Transverse colon (tissue), 4 donors: ENCODE measurements at regions of chr1 and their contacts with region 1.

Region 1: DNA sequence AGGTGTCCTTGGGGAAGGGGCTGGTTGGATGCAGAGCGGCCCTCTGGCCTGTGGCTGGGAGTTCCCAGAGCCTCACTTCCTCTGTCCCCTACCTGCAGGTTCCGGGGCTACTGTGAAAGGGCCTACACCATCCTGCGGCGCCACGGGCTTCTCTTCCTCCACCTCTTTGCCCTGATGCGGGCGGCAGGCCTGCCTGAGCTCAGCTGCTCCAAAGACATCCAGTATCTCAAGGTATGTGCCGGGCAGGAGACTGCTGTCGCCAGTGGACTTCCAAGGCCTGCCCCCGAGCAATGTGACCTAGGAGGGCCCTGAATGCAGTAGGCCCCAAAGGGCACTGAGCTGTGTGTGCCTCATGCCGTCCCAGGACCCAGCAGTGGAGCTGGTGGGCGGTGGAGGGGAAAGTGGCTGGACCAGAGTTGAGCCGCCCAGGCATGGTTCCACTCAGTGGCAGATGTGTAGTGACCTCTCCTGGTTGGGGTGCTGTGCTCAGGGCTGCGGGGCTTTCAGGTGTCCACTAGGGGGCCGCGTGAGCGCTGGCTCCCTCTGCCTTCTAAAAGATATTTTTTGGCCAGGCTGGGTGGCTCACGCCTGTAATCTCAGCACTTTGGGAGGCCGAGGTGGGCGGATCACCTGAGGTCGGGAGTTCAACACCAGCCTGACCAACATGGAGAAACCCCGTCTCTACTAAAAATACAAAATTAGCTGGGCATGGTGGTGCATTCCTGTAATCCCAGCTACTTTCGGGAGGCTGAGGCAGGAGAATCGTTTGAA is 73.4 kb downstream of the PIK3CD start:
- DNase-seq: peak; percentile 65
- H3K4me3 ChIP-seq: no peak overlapping the region
- H3K27ac ChIP-seq: no peak overlapping the region
- H3K4me1 ChIP-seq: peaks cover 0 to 3% (median 0%) of the 10 kb centered on the region in 4 donors
- H3K27me3 ChIP-seq: no peaks in the 10 kb centered on the region
- CTCF ChIP-seq: peak; percentile 75 to 91 (median 84)
- EP300 ChIP-seq: no peak
- POLR2A ChIP-seq: no peak

Region 2: DNA sequence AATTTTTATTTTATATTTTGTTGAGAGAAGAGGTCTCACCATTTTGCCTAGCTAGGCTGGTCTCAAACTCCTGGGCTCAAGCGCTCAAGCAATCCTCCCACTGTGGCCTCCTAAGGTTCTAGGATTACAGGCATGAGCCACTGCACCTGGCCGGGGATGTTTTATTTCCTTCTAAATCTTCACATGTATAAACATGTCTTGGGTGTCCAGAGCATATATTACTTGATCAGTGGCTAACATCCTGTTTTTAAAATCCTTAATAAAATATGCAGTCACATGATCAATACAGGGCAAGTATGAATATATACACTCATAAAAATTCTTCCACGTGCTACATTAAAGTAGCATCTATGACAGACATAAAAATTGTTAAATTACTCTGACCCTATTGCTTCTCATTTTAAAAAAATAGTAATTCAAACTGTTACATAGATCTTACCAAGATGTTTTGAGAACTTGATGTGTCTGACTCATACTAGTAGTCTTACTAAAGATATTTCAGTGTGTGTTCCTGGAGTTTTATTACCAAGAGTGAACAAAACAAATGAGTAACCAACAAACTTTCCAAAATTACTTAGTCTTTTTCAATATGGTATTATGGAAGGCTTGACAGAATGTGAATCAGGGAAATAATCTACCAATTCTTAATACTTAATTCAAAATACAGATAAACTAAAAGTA is 1184.5 kb before region 1 on chr1:
- in situ Hi-C with region 1: no loop called
- intact Hi-C with region 1: no loop called
- DNase-seq: no peak
- H3K4me3 ChIP-seq: no peak overlapping the region
- H3K27ac ChIP-seq: peak overlapping the region; percentile 38 to 61 (median 52)
- H3K4me1 ChIP-seq: peaks cover 0 to 26% (median 3%) of the 10 kb centered on the region in 4 donors
- H3K27me3 ChIP-seq: no peaks in the 10 kb centered on the region
- CTCF ChIP-seq: no peak
- EP300 ChIP-seq: no peak
- POLR2A ChIP-seq: no peak

Region 3: DNA sequence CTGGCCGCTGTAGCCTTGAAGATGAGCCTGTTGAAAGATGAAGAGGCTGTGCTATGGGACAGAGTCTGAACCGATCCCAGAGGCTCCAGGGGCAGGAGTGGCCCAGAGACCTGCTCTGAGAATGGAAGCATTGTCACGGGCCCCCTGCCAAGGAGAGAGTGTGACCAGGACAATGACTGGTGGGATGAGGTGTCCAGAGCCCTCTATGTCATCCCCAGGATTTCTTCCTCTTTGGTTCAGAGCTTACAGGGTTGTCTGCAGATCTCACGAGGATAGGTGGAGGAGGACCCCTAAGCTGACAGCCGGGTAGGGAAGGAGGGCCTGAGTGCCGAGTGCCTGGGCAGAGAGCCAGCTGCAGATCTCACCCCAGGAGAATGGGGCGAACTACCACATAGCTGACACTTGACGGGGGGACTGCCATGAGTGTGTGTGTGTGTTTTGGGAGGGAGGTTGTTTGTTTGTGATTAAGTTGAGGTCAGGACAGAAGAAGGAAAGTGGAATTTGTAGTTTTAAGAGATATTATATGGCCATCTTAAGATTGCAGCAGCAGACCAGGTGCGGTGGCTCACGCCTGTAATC is 48.0 kb before region 1 on chr1:
- in situ Hi-C with region 1: no loop called
- intact Hi-C with region 1: no loop called
- DNase-seq: no peak
- H3K4me3 ChIP-seq: no peak overlapping the region
- H3K27ac ChIP-seq: no peak overlapping the region
- H3K4me1 ChIP-seq: no peaks in the 10 kb centered on the region
- H3K27me3 ChIP-seq: no peaks in the 10 kb centered on the region
- CTCF ChIP-seq: no peak
- EP300 ChIP-seq: no peak
- POLR2A ChIP-seq: no peak

Region 4: DNA sequence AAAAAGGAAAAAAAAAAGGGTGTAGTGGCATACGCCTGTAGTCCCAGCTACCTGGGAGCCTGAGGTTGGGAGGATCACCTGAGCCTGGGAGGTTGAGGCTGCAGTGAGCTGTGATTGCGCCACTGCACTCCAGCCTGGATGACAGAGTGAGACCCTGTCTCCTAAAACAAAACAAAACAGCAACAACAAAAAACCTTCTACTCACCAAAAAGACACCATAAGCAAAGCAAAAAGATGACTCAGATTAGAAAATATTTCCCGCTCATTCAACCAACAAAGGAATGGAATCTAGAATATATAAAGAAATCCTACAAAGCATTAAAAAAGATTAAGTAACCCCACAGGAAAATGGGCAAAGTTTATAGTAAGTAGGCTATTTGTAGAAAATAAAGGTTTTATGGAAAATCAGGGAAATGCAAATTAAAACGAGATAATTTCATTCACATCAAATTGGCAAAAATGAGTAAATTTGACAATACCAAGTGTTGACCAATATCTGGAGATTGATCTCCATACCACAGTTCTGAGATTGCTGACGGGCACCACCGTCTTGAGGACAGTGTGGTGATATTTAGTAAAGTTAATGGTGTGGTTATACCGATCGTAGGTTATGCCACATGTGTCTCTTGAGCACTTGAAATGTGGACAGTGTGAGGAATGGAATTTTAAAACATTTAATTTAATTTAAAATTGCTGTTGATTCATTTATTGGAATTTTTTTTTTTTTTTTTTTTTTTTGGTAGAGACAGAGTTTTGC is 19.4 kb before region 1 on chr1:
- in situ Hi-C with region 1: no loop called
- intact Hi-C with region 1: no loop called
- DNase-seq: no peak
- H3K4me3 ChIP-seq: no peak overlapping the region
- H3K27ac ChIP-seq: no peak overlapping the region
- H3K4me1 ChIP-seq: no peaks in the 10 kb centered on the region
- H3K27me3 ChIP-seq: no peaks in the 10 kb centered on the region
- CTCF ChIP-seq: no peak
- EP300 ChIP-seq: no peak
- POLR2A ChIP-seq: no peak

Region 5: DNA sequence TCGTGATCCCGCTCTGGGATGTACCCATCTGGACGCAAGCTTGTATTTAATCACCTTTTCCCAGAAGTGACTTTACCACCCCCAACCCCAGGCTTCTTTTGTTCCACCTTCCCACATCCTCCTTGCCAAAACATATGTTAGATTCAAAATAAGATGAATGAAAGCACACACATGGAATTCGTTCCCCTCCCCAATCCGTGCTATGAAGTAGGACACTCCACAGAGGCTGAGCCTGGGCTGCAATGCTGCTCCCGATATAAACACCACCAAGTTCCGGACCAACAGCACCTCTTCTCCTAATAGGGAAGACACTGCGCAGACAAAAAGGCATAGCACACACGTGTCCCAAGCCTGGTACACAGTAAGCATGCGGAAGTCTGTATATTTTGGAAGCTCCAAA is 12.8 kb after region 1 on chr1:
- in situ Hi-C with region 1: no loop called
- intact Hi-C with region 1: loop called (anchors 2 kb)
- DNase-seq: no peak
- H3K4me3 ChIP-seq: no peak overlapping the region
- H3K27ac ChIP-seq: no peak overlapping the region
- H3K4me1 ChIP-seq: no peaks in the 10 kb centered on the region
- H3K27me3 ChIP-seq: no peaks in the 10 kb centered on the region
- CTCF ChIP-seq: no peak
- EP300 ChIP-seq: no peak
- POLR2A ChIP-seq: no peak

Region 6: DNA sequence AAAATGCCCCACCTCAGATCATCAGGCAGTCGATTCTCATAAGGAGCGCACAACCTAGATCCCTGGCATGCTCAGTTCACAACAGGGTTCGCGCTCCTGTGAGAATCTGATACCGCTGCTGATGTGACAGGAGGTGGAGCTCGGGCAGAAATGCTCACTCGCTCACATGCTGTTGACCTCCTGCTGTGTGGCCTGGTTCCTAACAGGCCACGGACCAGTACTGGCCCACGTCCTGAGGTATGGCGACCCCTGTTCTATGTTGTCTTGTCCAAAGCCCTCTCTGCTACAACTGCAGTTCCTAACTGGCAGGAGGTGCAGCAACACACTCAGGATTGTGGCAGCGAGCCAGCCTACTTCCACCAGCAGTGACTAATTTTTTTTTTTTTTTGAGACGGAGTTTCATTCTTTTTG is 28.2 kb after region 1 on chr1:
- in situ Hi-C with region 1: no loop called
- intact Hi-C with region 1: loop called (anchors 1 kb)
- DNase-seq: no peak
- H3K4me3 ChIP-seq: no peak overlapping the region
- H3K27ac ChIP-seq: no peak overlapping the region
- H3K4me1 ChIP-seq: no peaks in the 10 kb centered on the region
- H3K27me3 ChIP-seq: no peaks in the 10 kb centered on the region
- CTCF ChIP-seq: no peak
- EP300 ChIP-seq: no peak
- POLR2A ChIP-seq: no peak

Region 7: DNA sequence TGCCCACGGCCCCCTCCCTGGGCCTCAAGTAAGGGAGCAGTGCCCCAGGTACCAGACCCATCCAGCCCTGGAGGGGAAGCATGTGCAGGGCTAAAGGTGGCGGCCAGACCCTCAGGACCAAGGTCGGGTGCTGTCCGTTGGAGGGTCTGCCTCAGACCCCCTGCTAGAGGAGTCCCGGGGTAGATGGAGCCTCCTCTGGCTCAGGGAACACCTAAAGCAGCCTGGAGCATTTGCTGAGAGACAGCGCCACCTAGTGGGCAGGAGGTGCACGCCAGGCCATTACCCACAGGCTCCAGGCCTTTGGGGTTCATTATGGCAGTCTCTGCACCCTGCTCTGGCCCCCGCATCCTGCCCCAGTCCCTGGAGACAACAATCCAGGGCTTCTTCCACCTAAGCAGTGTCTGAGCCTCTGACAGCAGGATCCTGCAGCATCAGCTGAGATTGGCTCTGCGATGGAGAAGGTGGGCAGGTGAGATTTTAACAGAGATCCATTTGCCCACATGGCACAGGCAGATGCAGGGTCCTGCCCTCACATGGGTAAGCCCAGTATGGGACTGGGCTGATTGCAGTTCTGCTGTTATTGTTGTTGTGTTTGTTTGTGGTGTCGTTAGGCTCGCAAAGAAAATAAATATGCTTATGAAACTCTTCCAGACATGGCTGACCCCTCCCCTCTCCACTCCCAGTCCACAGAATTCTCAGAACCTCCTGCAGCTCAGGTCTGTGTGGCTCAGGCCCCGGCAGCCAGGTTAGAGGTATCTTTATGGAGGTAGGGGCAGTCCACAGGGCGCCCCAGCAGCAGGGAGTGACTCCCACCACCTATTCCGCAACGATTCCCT is 142.7 kb after region 1 on chr1:
- in situ Hi-C with region 1: no loop called
- intact Hi-C with region 1: loop called (anchors 10 kb)
- DNase-seq: peak; percentile 88
- H3K4me3 ChIP-seq: no peak overlapping the region
- H3K27ac ChIP-seq: no peak overlapping the region
- H3K4me1 ChIP-seq: no peaks in the 10 kb centered on the region
- H3K27me3 ChIP-seq: no peaks in the 10 kb centered on the region
- CTCF ChIP-seq: peak; percentile 96 to 98 (median 97)
- EP300 ChIP-seq: no peak
- POLR2A ChIP-seq: no peak